WTC11 (cell line): ENCODE measurements at regions of chr11 and their contacts with region 1.

Region 1: GRCh38 chr11:64688534-64688982 is 34.4 kb downstream of the NRXN2 start:
- DNase-seq: peak; percentile 98
- ATAC-seq: peak; percentile 88
- H3K4me3 Mint-ChIP-seq: peak overlapping the region; percentile 87
- H3K27ac Mint-ChIP-seq: peak overlapping the region; percentile 39; the same call in 1 of the 2 replicates
- H3K4me1 Mint-ChIP-seq: peaks cover 27% of the 10 kb centered on the region
- H3K27me3 Mint-ChIP-seq: peaks cover 41% of the 10 kb centered on the region
- CTCF ChIP-seq: peak; percentile 93

Region 2: GRCh38 chr11:64629796-64630562 is 58.6 kb before region 1 on chr11:
- CTCF ChIA-PET with region 1: interaction called, 19 read pairs
- POLR2A ChIA-PET with region 1: no interaction called
- DNase-seq: peak; percentile 99
- ATAC-seq: peak; percentile 98
- H3K4me3 Mint-ChIP-seq: peak overlapping the region; percentile 43
- H3K27ac Mint-ChIP-seq: no peak overlapping the region
- H3K4me1 Mint-ChIP-seq: peaks cover 16% of the 10 kb centered on the region
- H3K27me3 Mint-ChIP-seq: peaks cover 66% of the 10 kb centered on the region
- CTCF ChIP-seq: peak; percentile 54

Region 3: DNA sequence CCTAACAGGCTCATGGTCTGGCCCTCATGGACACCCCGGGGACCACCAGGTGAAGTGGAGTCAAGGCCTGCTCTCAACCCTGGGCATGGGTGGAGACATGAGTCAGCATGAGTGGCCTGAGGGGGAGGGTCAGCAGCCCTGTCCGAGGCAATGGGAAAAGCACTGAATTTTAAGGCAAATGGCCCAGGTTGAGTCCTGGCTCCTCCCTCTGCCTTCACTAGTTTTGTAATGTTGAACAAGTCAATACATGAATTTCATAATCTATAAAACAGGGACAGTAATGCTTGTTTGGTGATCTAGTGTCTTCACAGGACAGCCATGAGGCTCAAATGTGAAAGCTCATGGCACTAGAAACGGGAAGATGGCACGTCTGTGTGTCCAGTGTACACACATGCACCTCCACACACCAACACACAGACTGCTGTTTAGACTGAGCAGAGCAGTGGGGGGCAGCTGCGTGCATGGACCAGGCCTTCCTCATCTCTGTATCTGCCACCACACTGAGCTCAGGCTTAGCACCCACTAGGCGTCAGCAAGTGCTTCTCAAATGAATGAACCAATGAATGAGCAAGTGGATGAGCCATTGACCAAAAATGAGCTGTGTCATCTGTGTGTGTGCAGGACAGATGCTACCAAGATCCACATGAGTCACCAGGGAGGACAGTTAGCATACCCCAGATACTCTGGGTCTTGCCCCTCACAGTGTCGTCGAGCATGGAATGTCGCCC is 29.0 kb before region 1 on chr11:
- CTCF ChIA-PET with region 1: interaction called, 35 read pairs
- POLR2A ChIA-PET with region 1: no interaction called
- DNase-seq: no peak
- ATAC-seq: no peak
- H3K4me3 Mint-ChIP-seq: no peak overlapping the region
- H3K27ac Mint-ChIP-seq: no peak overlapping the region
- H3K4me1 Mint-ChIP-seq: 0 out of 2 replicates have a peak, but pooled peaks cover 2% of the 10 kb centered on the region
- H3K27me3 Mint-ChIP-seq: peaks cover 3% of the 10 kb centered on the region; the same call in 1 of the 2 replicates
- CTCF ChIP-seq: no peak

Region 4: DNA sequence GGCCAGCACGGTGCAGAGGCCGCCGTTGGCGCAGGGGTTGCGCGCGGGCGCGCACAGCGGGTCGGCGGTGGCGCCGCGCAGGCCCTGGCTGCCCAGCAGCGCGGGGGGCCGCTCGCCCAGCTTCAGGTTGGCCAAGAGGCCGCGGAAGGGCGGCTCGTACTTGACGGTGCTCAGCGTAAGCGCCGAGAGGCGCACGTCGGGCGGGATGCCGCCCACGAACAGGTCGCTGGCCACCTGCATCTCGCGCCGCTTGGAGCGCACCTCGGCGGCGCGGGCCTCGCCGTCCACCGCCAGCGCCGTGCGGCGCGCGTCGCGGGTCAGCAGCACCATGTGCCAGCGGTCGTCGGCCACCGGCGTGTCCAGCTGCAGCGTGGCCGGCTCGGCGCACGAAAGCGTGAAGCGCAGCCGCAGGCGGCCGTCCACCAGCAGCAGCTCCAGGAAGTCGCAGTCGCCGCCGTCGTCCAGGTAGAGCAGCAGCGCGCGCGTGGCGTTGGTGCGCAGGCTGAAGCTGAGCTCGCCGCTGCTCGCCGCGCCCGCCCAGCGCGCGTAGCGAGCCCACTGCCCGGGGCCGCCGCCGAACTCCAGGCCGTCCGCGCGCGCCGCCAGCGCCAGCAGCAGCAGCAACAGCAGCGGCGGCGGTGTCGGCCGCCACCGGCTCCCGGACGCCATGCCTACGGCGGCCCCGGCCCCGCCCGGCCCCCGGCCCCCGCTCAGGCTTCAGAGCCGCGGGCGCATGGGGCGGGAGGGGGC is 24.6 kb after region 1 on chr11:
- CTCF ChIA-PET with region 1: interaction called, 56 read pairs
- POLR2A ChIA-PET with region 1: interaction called, 3 read pairs
- DNase-seq: peak; percentile 39
- ATAC-seq: 0 out of 2 replicates have a peak, but pooled peaks have one; percentile 1
- H3K4me3 Mint-ChIP-seq: no peak overlapping the region
- H3K27ac Mint-ChIP-seq: no peak overlapping the region
- H3K4me1 Mint-ChIP-seq: peaks cover 57% of the 10 kb centered on the region
- H3K27me3 Mint-ChIP-seq: peaks cover 73% of the 10 kb centered on the region
- CTCF ChIP-seq: no peak

Region 5: DNA sequence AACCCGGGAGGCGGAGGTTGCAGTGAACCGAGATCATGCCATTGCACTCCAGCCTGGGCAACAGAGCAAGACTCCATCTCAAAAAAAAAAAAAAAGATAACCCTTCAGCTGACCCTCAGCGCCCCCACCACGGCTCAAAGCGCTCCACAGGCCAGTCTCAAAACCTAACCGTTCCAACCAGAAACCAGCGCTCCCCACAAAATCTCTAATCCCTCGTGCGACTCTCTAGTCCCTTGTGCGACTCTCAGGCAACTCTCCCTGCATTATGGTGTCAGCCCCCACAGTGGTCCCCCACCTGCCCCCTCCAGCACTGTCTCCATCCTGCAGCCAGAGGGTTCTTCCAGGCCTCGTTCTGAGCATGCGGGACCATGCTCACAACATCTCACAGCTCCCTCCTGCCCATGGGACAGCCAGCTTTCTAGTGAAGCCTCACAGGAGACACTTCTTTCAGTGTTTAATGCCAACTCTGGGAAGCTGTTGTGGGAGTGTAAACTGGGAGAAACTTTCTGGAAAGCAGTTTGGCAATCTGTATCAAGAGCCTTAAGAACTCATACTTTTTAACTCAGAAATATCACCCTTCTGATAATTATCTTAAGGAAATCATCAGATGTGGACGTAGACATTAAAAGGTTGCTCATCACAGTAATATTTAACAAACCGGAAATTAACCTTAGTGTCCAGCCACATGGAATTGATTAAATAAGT is 59.6 kb after region 1 on chr11:
- CTCF ChIA-PET with region 1: interaction called, 68 read pairs
- POLR2A ChIA-PET with region 1: no interaction called
- DNase-seq: no peak
- ATAC-seq: no peak
- H3K4me3 Mint-ChIP-seq: no peak overlapping the region
- H3K27ac Mint-ChIP-seq: no peak overlapping the region
- H3K4me1 Mint-ChIP-seq: peaks cover 16% of the 10 kb centered on the region
- H3K27me3 Mint-ChIP-seq: peaks cover 12% of the 10 kb centered on the region
- CTCF ChIP-seq: no peak

Region 6: DNA sequence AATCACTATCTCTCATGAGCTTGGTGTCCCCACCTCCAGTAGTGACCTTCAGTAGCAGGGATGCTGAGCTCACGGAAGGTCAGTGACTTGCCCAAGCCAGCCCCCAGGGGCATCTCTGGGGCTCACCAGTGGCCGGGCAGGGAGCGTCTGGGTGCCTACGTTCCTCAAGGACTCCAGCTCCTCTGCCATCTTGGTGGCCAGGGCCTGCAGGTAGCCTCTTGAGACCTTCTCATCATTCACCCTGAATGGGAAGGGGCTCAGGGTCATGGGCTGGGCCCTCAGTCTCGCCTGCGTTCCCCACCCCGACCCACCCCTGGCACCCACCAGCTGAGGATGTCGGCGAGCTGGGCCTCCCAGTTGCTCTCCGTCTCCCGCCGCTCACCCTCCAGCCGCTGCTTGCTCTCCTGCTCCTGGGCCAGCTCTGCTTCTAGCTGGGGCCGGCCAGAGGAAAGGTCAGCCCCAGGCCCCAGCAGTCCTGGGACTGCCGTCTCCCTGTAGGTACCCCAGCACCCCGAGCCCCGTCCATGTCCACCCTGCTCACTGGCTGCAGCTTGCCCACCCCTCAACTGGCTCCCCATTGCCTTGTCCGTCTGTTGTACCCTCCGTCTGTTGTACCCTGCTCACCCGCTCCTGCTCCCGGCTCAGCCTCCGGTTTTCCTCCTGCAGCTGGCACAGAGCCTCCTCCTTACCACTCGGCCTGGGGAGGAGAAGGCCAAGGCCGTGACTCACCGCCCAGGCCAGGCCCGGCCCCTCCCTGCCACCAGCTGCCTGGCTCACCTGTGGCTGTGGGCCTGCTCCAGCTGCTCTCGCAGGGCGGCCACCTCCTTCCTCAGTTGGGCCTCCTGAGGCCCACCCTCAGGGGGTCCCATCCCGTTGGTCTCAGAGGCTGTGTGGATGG is 146.4 kb after region 1 on chr11:
- CTCF ChIA-PET with region 1: no interaction called
- POLR2A ChIA-PET with region 1: no interaction called
- DNase-seq: no peak
- ATAC-seq: no peak
- H3K4me3 Mint-ChIP-seq: no peak overlapping the region
- H3K27ac Mint-ChIP-seq: no peak overlapping the region
- H3K4me1 Mint-ChIP-seq: no peaks in the 10 kb centered on the region
- H3K27me3 Mint-ChIP-seq: no peaks in the 10 kb centered on the region
- CTCF ChIP-seq: no peak